AG04449 (cell line): ENCODE measurements at regions of chr10 and their contacts with region 1.

Region 1: DNA sequence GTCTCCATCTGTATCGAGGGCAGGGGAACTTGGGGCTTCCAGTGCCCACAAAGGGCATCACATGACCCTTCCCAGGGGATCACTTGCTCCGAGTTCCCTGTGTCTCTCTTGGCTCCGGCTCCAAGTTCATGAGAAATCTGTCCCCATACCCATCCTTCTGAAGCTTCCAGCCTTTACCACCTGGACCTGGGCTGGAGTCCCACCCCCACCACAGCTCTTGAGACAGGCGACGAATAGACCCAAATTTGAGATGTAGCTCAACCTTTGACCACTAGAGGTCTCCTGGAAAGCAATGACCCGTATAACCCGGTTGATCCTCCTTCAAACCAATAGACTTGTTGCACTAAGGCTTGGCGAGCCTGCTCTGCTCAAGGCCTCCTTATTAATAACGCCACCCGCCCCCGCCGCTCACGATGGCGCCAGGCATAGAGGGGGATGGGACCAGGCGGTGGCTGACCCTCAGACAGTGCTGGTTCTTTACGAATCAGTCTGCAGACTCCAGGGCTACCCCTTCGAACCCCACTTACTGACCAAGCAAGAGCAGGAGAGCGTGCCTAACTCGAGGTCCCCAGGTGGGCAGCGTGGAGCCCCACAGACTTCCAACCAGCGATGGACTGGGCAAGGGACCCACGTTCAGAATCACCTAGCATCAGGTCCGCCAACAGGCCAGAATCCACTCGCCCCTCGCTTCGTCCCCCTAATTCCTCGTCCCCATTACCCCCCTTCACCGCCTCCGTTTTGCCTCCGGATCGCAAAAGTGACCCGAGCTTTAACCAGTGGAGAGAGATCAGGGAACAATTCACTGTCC is 4.4 kb upstream of the ARID5B start:
- DNase-seq: no peak
- H3K4me3 ChIP-seq: peak overlapping the region; percentile 37
- CTCF ChIP-seq: peak; percentile 56

Region 2: DNA sequence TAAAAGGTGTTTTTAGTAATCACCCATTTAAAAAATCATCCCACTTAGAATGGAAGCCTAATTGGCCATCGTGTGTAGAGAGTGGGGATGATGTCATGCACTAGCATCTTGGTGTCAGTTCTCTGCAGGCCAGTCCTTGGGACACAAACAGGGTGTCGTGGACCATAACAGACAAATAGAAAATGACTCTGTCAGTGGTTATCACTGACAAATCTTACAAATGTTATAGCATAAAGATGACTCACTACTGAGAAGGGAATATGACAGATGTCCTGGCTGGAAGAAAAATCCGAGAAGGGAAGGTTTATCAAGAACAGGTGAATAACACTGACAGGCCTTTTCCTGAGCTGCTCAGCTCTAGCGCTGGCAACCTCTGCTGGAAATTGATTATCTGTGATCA is 223.7 kb before region 1 on chr10:
- CTCF ChIA-PET with region 1: no interaction called
- POLR2A ChIA-PET with region 1: no interaction called
- DNase-seq: no peak
- H3K4me3 ChIP-seq: no peak overlapping the region
- CTCF ChIP-seq: no peak

Region 3: DNA sequence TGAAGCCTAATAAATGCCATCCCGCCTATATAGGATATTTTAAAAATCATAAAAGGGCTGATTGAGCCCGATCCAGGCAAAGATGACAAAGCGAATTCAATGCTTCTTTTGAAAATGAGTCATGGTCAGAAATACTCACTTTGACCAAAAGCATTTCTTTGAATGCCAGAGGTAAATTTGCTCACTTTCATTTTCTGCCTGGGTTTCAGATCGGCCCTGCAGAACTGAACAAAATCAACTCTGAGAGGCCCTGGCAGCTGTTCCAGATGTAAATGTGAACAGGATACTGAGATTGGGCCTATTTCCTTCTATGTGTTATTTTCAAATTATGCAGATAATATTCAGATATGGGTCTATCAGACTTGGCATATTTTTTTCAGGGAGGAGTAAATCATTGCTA is 110.3 kb before region 1 on chr10:
- CTCF ChIA-PET with region 1: no interaction called
- POLR2A ChIA-PET with region 1: no interaction called
- DNase-seq: peak; percentile 34
- H3K4me3 ChIP-seq: no peak overlapping the region
- CTCF ChIP-seq: no peak

Region 4: DNA sequence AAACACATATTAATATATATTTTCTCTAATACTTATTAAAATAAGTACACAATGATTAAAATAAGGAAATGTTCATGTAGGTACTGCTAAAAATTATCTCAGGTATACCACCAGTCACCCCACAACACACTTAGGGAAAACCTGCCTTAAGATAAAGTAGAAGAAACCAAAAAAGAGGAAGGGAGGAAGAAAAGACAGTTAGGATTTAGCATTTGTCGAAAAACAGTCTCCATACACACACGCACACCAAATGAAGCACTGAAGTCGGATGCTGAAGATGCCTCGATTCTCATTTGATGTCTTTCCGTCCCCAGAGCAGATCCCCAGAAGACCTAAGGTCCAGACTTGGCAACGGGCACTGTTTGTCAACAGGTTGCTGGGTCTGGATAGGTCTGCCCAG is 25.6 kb before region 1 on chr10:
- CTCF ChIA-PET with region 1: interaction called, 15 read pairs
- POLR2A ChIA-PET with region 1: no interaction called
- DNase-seq: no peak
- H3K4me3 ChIP-seq: no peak overlapping the region
- CTCF ChIP-seq: no peak

Region 5: DNA sequence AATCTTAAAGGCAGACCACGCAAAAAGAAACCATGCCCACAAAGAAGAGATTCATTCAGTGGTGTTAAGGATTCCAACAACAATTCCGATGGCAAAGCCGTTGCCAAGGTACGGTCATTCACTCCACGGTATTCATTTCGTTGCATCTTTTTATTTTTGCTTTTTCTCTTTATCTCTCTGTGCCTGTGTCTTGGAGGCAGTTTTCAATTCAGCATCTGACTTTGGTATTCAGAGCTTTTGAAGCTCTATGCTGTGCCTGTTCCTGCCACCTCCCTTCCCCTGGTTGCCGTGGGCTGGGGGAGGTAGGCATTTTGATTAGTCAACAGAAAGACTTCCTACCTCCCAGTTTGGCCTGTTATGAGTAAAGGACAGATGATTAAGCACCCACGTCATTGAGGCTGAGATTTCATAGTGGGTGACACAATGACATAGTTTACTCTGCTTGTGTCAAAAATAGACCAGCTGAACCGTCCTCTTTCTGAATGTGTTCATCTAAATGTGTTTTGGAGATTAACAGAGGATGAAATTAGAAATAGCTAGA is 153.9 kb after region 1 on chr10:
- CTCF ChIA-PET with region 1: interaction called, 13 read pairs
- POLR2A ChIA-PET with region 1: interaction called, 4 read pairs
- DNase-seq: peak; percentile 80
- H3K4me3 ChIP-seq: peak overlapping the region; percentile 67
- CTCF ChIP-seq: no peak